ENCODE measurements at regions of chr5 and their contacts with region 1.

Region 1: GRCh38 chr5:148730943-148731861 is 76.9 kb upstream of the HTR4 start:
- DNase-seq: peak; percentile 32
- H3K4me3 ChIP-seq: peak overlapping the region; percentile 33
- H3K27ac ChIP-seq: no peak overlapping the region
- H3K4me1 ChIP-seq: peaks cover 17% of the 10 kb centered on the region
- H3K27me3 ChIP-seq: no peaks in the 10 kb centered on the region
- CTCF ChIP-seq: peak; percentile 96

Region 2: DNA sequence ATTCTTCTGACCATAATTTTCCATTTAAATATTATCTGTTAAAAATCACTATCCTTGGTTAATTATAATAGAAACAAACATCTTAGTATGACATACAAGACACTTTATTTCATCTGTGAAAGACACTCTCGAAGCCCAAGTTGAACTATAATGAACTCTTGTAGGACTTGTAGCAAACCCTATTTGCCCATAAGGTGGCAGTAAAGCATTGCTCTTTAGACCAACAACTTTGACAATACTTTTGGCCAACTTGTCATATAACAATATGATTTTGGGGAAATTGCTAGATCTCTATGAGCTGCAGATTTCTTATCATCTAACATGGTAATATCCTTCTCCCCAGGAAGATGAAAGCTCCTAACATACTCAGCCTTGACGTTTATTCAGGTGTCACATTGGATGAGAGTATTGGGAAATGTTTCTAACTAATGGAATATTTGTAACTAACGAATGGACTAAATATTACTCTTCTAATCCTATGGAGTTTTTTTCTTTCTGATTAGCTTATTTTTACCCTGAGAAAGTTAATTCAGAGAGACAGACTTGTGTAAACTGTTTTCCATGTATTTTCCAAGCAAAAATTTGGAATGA is 551.9 kb before region 1 on chr5:
- intact Hi-C with region 1: loop called (anchors 2 kb)
- DNase-seq: no peak
- H3K4me3 ChIP-seq: no peak overlapping the region
- H3K27ac ChIP-seq: no peak overlapping the region
- H3K4me1 ChIP-seq: no peaks in the 10 kb centered on the region
- H3K27me3 ChIP-seq: no peaks in the 10 kb centered on the region
- CTCF ChIP-seq: peak; percentile 84

Region 3: GRCh38 chr5:148443998-148444397 is 287.2 kb before region 1 on chr5:
- intact Hi-C with region 1: loop called (anchors 2 kb)
- DNase-seq: no peak
- H3K4me3 ChIP-seq: no peak overlapping the region
- H3K27ac ChIP-seq: peak overlapping the region; percentile 3
- H3K4me1 ChIP-seq: peaks cover 40% of the 10 kb centered on the region
- H3K27me3 ChIP-seq: no peaks in the 10 kb centered on the region
- CTCF ChIP-seq: peak; percentile 82

Region 4: GRCh38 chr5:149114403-149115312 is 383.5 kb after region 1 on chr5:
- intact Hi-C with region 1: loop called (anchors 10 kb)
- DNase-seq: peak; percentile 38
- H3K4me3 ChIP-seq: no peak overlapping the region
- H3K27ac ChIP-seq: peak overlapping the region; percentile 37
- H3K4me1 ChIP-seq: peaks cover 12% of the 10 kb centered on the region
- H3K27me3 ChIP-seq: no peaks in the 10 kb centered on the region
- CTCF ChIP-seq: peak; percentile 89

Measured in left ventricle myocardium inferior (tissue), 1 donor.